ENCODE measurements at regions of chr5 and their contacts with region 1.

Region 1: DNA sequence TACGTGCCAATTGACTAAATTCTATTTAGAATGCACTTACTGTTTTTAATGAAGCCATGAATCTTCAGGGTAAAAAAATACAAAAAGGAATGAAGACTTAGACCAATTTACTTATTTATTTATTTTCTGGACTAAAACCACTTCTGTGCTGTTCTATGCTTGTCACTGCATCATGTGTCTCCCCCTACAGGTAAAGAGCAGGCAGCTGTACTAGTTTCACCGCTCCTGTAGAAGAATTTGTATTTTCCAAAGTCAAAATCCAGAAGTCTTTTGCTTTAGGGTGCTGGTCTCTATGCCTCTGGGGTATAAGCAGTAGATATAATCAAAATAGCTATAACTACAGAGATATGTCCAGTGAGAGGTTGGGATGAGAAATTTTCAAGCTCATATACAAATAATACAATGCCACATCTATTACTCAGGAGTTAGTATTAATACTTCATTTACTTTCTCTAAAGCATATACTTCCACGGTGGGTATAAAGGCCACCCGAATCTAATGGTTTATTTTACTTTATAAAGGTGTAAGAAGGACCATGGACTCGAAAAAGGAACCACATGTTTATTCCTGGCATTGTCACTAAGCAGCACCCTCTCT is 591.5 kb downstream of the RAB3C start:
- DNase-seq: peak; percentile 47
- ATAC-seq: peak; percentile 76
- H3K4me3 Mint-ChIP-seq: no peak overlapping the region
- H3K27ac Mint-ChIP-seq: no peak overlapping the region
- H3K4me1 Mint-ChIP-seq: peaks cover 19% of the 10 kb centered on the region
- H3K27me3 Mint-ChIP-seq: no peaks in the 10 kb centered on the region
- CTCF ChIP-seq: peak; percentile 92

Region 2: DNA sequence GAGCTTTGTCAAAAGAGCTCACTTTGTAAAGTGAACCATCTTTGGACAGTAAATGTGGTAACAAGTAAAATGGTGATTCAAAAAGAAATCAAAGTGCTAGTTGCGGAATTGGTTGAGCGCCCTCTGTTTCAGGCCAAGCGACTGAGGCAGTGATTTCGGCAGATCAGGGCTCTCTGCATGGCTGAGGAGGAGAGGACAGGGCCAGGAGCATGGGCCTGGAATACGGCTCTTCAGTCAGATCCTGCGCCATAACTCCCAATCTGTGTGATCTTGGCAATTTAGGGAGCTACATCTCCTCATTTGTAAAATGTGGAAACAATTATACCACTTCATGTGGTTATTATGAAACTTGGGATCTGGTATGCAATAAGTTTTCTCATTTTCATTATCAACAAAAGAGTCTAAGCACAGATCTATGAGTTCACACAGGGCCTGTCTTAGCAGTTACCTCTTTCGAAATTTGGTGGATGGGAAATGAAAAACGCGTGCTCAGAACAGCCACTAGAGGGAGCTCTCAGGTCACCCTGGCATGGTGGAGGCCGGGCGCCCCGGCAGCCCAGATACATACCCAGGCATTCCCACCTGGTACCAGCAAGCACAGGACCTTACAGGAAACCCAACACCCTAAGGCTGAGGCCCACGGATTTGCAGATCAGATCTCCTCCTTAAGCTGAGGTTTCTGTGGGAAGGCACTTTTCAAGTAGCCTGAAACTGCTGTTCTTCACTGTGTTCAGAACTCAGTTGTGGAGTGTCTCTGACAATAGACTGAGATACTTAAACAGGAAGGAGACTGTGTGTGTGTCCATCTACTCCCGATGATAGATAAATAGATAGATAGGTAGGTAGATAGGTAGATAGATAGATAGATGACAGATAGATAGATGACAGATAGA is 287.8 kb before region 1 on chr5:
- CTCF ChIA-PET with region 1: interaction called, 68 read pairs
- POLR2A ChIA-PET with region 1: no interaction called
- intact Hi-C with region 1: loop called (anchors 2 kb)
- DNase-seq: peak; percentile 68
- ATAC-seq: peak; percentile 75
- H3K4me3 Mint-ChIP-seq: no peak overlapping the region
- H3K27ac Mint-ChIP-seq: no peak overlapping the region
- H3K4me1 Mint-ChIP-seq: peaks cover 20% of the 10 kb centered on the region
- H3K27me3 Mint-ChIP-seq: peaks cover 5% of the 10 kb centered on the region
- CTCF ChIP-seq: peak; percentile 92

Region 3: GRCh38 chr5:59020611-59021285 is 153.6 kb before region 1 on chr5:
- CTCF ChIA-PET with region 1: interaction called, 10 read pairs
- POLR2A ChIA-PET with region 1: no interaction called
- intact Hi-C with region 1: no loop called
- DNase-seq: peak; percentile 55
- ATAC-seq: peak; percentile 87
- H3K4me3 Mint-ChIP-seq: peak overlapping the region; percentile 30
- H3K27ac Mint-ChIP-seq: peak overlapping the region; percentile 92
- H3K4me1 Mint-ChIP-seq: peaks cover 60% of the 10 kb centered on the region
- H3K27me3 Mint-ChIP-seq: no peaks in the 10 kb centered on the region
- CTCF ChIP-seq: no peak

Region 4: GRCh38 chr5:59099270-59099994 is 74.9 kb before region 1 on chr5:
- CTCF ChIA-PET with region 1: interaction called, 13 read pairs
- POLR2A ChIA-PET with region 1: no interaction called
- intact Hi-C with region 1: no loop called
- DNase-seq: peak; percentile 75
- ATAC-seq: peak; percentile 94
- H3K4me3 Mint-ChIP-seq: peak overlapping the region; percentile 11
- H3K27ac Mint-ChIP-seq: peak overlapping the region; percentile 74
- H3K4me1 Mint-ChIP-seq: peaks cover 39% of the 10 kb centered on the region
- H3K27me3 Mint-ChIP-seq: no peaks in the 10 kb centered on the region
- CTCF ChIP-seq: no peak

Region 5: DNA sequence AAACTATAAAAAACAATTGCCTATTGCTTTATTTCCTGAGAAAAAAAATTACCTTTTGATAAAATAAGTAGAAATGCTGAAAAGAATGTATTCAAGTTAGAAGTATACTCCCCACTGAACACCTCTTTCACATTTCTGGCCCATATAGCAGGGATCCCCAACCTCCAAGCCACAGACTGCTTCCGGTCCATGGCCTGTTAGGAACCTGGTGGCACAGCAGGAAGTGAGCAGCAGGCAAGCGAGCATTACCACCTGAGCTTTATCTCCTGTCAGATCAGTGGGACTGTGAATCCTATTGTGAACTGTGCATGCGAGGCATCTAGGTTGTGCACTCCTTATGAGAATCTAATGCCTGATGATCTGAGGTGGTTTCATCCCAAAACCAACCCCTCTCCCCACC is 27.6 kb before region 1 on chr5:
- CTCF ChIA-PET with region 1: interaction called, 18 read pairs
- POLR2A ChIA-PET with region 1: interaction called, 4 read pairs
- intact Hi-C with region 1: no loop called
- DNase-seq: peak; percentile 27
- ATAC-seq: peak; percentile 50
- H3K4me3 Mint-ChIP-seq: no peak overlapping the region
- H3K27ac Mint-ChIP-seq: no peak overlapping the region
- H3K4me1 Mint-ChIP-seq: peaks cover 16% of the 10 kb centered on the region
- H3K27me3 Mint-ChIP-seq: no peaks in the 10 kb centered on the region
- CTCF ChIP-seq: no peak

Region 6: GRCh38 chr5:59188419-59189225 is 14.3 kb after region 1 on chr5:
- CTCF ChIA-PET with region 1: interaction called, 52 read pairs
- POLR2A ChIA-PET with region 1: no interaction called
- intact Hi-C with region 1: no loop called
- DNase-seq: peak; percentile 73
- ATAC-seq: peak; percentile 75
- H3K4me3 Mint-ChIP-seq: no peak overlapping the region
- H3K27ac Mint-ChIP-seq: no peak overlapping the region
- H3K4me1 Mint-ChIP-seq: peaks cover 3% of the 10 kb centered on the region
- H3K27me3 Mint-ChIP-seq: peaks cover 10% of the 10 kb centered on the region
- CTCF ChIP-seq: peak; percentile 90

Region 7: GRCh38 chr5:59206132-59206581 is 31.8 kb after region 1 on chr5:
- CTCF ChIA-PET with region 1: no interaction called
- POLR2A ChIA-PET with region 1: no interaction called
- intact Hi-C with region 1: no loop called
- DNase-seq: no peak
- ATAC-seq: no peak
- H3K4me3 Mint-ChIP-seq: no peak overlapping the region
- H3K27ac Mint-ChIP-seq: no peak overlapping the region
- H3K4me1 Mint-ChIP-seq: peaks cover 6% of the 10 kb centered on the region
- H3K27me3 Mint-ChIP-seq: no peaks in the 10 kb centered on the region
- CTCF ChIP-seq: no peak

Region 8: DNA sequence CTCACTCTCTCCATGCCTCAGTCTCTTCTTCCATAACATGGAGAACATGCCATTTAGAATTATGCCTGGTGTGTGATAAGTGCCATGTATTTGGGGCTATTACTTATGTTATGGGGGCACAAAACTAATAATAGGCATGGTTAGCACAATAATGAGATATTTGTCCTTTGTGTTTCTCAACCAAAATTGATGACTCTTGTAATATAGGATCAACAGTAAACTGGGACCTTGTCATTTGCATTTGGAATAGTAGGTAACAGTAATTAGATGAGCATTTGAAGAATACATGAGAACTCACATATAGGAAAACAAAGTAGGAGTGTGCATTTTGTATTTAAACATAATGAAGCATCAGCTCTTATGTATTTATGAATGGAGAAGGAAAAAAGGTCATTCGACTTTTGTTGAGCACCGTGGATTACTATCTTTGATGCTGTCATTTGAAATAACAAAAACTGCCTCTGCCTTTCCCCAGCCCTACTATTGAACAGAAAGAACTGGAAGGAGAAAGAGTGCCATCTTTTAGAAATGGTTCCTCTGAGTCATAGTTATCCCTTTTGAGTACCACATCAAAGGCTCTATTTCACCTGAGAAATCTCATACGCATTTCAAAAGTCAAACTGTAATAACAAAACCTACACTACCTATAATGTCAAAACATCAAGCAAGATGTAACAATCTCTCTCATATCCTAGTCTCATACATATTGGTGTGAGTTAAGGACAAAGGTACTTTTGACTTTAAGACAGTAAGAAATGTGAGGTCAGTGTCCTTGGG is 64.0 kb after region 1 on chr5:
- CTCF ChIA-PET with region 1: no interaction called
- POLR2A ChIA-PET with region 1: no interaction called
- intact Hi-C with region 1: no loop called
- DNase-seq: peak; percentile 11
- ATAC-seq: peak; percentile 92
- H3K4me3 Mint-ChIP-seq: no peak overlapping the region
- H3K27ac Mint-ChIP-seq: no peak overlapping the region
- H3K4me1 Mint-ChIP-seq: peaks cover 16% of the 10 kb centered on the region
- H3K27me3 Mint-ChIP-seq: peaks cover 18% of the 10 kb centered on the region
- CTCF ChIP-seq: no peak

Region 9: DNA sequence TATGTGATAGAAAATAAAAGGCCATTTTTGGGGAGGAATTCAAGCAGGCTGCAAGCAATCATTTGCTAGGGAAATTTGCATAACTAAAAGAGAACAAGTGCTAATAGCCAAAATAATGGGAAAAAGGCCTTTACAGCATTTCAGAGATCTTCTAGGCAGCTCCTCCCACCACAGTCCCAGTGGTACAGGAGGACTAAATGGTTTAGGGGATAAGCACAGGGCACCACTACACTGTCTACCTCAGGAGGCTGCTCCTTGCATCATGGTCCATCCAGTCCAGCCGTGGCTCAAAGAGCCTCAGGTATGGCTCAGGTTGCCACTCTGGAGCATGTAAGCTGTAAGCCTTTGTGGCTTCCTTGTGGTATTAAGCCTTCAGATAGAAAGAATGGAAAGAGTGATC is 233.6 kb after region 1 on chr5:
- CTCF ChIA-PET with region 1: no interaction called
- POLR2A ChIA-PET with region 1: no interaction called
- intact Hi-C with region 1: no loop called
- DNase-seq: no peak
- ATAC-seq: no peak
- H3K4me3 Mint-ChIP-seq: no peak overlapping the region
- H3K27ac Mint-ChIP-seq: no peak overlapping the region
- H3K4me1 Mint-ChIP-seq: no peaks in the 10 kb centered on the region
- H3K27me3 Mint-ChIP-seq: peaks cover 6% of the 10 kb centered on the region
- CTCF ChIP-seq: no peak